ENCODE measurements at regions of chr19 and their contacts with region 1.

Region 1: GRCh38 chr19:39412100-39412866 is at the start of gene PLEKHG2:
- DNase-seq: peak; percentile 98
- ATAC-seq: peak; percentile 66
- H3K4me3 Mint-ChIP-seq: peak within 1 kb of the TSS; percentile 84
- H3K27ac Mint-ChIP-seq: peak within 1 kb of the TSS; percentile 87
- H3K4me1 Mint-ChIP-seq: peaks cover 41% of the 10 kb centered on the region
- H3K27me3 Mint-ChIP-seq: no peaks in the 10 kb centered on the region
- total RNA-seq, gene PLEKHG2: 57.9 to 73.9 TPM

Region 2: GRCh38 chr19:39390755-39391592 is 21.3 kb before region 1 on chr19 and contains the starts of genes MED29 and PAF1:
- CTCF ChIA-PET with region 1: interaction called, 152 read pairs
- DNase-seq: peak; percentile 99
- ATAC-seq: peak; percentile 93
- H3K4me3 Mint-ChIP-seq: peak within 1 kb of the TSS; percentile 97
- H3K27ac Mint-ChIP-seq: peak within 1 kb of the TSS; percentile 99
- H3K4me1 Mint-ChIP-seq: peaks cover 40% of the 10 kb centered on the region
- H3K27me3 Mint-ChIP-seq: no peaks in the 10 kb centered on the region
- total RNA-seq, gene MED29: 31.0 to 31.2 TPM
- total RNA-seq, gene PAF1: 48.9 to 53.8 TPM

Region 3: DNA sequence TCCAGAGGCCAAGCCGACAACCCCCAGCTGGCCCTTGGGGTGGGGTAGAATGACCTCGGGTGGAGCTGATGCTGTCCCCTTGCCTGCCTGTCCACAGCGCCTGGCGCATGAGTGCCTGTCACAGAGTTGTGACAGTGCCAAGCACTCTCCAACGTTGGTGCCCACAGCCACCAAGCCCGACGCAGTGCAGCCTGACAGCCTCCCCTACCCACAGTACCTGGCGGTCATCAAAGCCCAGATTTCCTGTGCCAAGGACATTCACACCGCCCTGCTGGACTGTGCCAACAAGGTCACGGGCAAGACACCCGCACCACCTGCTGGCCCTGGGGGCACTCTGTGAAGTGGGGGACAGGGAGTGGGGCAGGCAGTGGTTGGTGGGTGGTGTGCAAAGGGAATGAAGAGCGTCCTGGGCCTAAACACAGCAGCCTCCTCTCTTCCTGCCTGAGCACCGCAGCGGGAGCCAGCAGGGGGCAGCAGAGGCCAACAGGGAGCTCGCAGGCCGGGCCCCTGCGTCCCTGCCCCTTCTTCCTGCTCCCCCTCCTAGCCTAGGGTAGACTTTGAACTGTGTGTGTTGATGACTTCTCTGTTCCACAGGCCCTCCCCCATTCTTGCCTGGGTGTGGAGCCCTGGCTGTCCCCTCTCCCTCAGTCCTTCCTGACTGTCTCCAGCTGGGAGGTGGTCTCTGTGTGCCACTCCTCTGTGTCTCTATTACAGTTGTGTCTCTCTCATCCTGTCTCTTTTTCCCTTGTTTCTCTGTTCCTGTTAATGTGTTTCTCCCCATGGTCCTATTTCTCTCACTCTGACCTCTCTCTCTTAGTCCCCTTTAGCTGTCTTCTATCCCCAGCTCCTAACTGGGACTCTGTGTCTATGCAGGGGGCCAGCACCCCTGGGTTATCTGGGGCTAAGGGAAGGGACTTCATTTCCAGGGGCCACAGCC is 14.7 kb before region 1 on chr19:
- CTCF ChIA-PET with region 1: interaction called, 152 read pairs
- DNase-seq: peak; percentile 96
- ATAC-seq: peak; percentile 66
- H3K4me3 Mint-ChIP-seq: peak overlapping the region; percentile 49
- H3K27ac Mint-ChIP-seq: peak overlapping the region; percentile 90
- H3K4me1 Mint-ChIP-seq: peaks cover 67% of the 10 kb centered on the region
- H3K27me3 Mint-ChIP-seq: no peaks in the 10 kb centered on the region

Region 4: DNA sequence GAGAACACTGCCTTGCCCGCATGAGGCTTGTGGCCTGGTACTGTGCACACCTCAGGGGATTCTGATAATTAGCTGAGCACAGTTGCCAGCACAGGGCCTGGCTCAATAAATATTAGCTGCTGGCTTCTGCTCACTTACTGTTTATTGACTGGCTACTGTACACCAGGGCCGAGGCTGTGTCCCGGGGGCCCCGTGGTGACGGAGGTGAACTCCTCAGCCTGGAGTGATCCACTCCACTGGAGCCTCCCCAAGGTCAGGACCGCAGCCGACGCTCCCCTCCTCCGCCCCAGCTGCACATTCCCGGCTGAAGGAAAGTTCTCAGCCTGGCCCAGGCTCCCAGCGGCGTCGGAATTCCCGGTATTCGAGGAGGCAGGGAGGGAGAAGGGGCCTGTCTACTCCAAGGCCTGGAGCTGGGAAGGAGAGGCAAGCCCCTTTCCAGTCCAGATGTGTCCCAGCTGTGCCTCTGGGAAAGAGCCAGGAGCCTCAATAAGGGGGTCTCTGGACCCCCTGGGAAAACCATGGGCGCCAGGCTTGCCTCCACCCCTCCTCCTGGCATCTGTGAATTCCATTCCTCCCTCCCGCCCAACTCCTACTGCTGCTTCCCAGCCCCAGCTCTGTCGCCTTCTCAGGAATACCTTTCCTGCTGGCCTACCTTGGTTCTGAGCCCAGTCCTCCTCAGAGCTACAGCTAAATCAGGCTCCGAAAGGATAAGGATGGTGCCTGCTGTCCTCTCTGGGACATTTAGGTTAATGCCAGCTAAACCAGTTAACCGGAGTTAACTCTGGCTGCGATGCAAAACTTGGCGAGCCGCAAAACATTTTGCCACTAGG is 16.2 kb after region 1 on chr19:
- CTCF ChIA-PET with region 1: interaction called, 10 read pairs
- DNase-seq: no peak
- ATAC-seq: no peak
- H3K4me3 Mint-ChIP-seq: no peak overlapping the region
- H3K27ac Mint-ChIP-seq: no peak overlapping the region
- H3K4me1 Mint-ChIP-seq: peaks cover 27% of the 10 kb centered on the region
- H3K27me3 Mint-ChIP-seq: no peaks in the 10 kb centered on the region

Region 5: DNA sequence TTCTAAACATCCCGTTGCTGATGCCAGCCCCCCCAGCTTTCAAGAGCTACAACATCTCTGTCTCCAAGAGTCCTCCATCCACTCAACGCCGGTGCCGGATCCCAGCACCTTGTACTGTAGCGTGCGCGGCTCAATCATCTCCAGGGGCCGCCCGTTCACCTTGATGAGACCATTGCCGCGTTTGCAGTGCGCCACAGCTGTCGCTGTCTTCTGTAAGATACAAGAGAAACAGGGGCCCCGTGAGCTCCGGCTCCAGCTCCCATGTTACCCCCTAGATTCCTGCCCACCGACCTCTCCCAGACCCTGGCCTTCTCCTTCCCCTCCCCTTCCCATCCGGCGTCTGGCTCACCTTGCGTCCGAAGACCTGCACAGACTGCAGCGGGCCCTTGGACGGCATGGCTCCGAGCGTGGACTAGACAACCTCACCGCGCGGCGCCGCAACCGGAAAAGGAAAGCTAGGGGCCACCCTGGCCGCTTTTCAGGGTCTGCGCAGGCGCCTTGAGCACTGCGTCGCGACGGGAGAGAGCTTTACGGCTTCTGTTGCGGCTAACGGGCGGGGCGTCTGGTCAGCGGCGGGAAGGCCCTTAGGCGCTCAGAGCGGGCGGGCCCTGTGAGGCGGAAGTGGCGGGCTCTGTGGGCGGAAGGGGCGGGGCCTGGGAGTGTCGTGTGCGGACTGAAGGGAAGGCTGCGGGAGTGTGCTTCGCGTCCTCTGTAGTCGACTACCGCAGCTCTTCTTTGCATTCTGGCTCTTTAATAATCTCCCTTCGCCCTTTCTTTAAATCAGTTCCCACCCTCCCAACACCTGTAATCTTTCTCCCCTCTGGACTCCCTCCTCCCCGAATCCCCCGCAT is 23.4 kb after region 1 on chr19 and contains the start of gene RPS16:
- CTCF ChIA-PET with region 1: interaction called, 15 read pairs
- DNase-seq: peak; percentile 99
- ATAC-seq: peak; percentile 87
- H3K4me3 Mint-ChIP-seq: peak within 1 kb of the TSS; percentile 99
- H3K27ac Mint-ChIP-seq: peak within 1 kb of the TSS; percentile 99
- H3K4me1 Mint-ChIP-seq: peaks cover 55% of the 10 kb centered on the region
- H3K27me3 Mint-ChIP-seq: peaks cover 4% of the 10 kb centered on the region
- total RNA-seq, gene RPS16: 1,815 to 2,117 TPM

Region 6: DNA sequence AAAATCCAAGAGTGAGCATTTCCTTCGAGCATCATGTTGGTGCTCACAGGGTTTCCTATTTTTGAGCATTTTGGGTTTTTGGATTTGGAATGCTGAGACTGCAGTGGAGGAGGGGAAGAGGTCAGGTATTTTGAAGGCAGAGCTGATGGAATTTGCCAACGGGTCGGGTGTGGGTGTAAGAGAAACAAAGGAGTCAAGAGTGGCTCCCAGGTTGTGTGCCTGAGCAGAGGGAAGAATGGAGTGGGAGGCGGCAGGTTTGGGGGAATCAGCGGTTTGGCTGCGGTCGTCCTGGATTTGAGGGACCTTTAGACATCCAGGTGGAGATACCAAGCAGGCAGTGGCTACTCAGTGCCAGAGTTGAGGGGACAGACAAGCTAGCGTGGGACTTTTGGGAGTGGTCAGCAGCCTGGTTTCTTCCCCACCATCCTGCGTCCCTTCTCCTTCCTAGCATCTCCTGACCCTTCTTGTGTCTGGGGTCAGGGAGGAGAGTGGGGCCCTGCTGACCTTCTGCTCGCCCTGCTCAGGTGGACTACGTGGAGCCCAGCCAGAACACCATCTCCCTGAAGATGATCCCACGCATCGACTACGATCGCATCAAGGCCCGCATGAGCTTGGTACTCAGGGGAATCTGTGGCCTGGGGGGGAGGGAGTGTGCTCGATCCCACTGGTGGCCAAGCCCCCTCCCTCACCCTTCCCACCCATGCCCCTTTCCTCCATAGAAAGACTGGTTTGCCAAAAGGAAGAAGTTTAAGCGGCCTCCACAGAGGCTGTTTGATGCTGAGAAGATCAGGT is 53.9 kb after region 1 on chr19:
- CTCF ChIA-PET with region 1: no interaction called
- DNase-seq: no peak
- ATAC-seq: no peak
- H3K4me3 Mint-ChIP-seq: no peak overlapping the region
- H3K27ac Mint-ChIP-seq: no peak overlapping the region
- H3K4me1 Mint-ChIP-seq: peaks cover 2% of the 10 kb centered on the region
- H3K27me3 Mint-ChIP-seq: no peaks in the 10 kb centered on the region

Measured in activated CD8-positive, alpha-beta memory T cell treated with anti-CD3 and anti-CD28 coated beads, Interleukin-2, amount 10 ng/mL, durations not matched to agents 7 days and 5 days (primary cell).